Activated CD4-positive, alpha-beta T cell treated with anti-CD3 and anti-CD28 coated beads, Interleukin-2, amount 10 ng/mL, durations not matched to agents 7 days and 5 days (primary cell): ENCODE measurements at regions of chr11 and their contacts with region 1.

Region 1: GRCh38 chr11:1574238-1574932 is 2.3 kb upstream of the DUSP8 start:
- DNase-seq: peak; percentile 42
- H3K4me3 Mint-ChIP-seq: no peak overlapping the region
- H3K27ac Mint-ChIP-seq: no peak overlapping the region
- H3K4me1 Mint-ChIP-seq: peaks cover 11% of the 10 kb centered on the region
- H3K27me3 Mint-ChIP-seq: peaks cover 35% of the 10 kb centered on the region

Region 2: DNA sequence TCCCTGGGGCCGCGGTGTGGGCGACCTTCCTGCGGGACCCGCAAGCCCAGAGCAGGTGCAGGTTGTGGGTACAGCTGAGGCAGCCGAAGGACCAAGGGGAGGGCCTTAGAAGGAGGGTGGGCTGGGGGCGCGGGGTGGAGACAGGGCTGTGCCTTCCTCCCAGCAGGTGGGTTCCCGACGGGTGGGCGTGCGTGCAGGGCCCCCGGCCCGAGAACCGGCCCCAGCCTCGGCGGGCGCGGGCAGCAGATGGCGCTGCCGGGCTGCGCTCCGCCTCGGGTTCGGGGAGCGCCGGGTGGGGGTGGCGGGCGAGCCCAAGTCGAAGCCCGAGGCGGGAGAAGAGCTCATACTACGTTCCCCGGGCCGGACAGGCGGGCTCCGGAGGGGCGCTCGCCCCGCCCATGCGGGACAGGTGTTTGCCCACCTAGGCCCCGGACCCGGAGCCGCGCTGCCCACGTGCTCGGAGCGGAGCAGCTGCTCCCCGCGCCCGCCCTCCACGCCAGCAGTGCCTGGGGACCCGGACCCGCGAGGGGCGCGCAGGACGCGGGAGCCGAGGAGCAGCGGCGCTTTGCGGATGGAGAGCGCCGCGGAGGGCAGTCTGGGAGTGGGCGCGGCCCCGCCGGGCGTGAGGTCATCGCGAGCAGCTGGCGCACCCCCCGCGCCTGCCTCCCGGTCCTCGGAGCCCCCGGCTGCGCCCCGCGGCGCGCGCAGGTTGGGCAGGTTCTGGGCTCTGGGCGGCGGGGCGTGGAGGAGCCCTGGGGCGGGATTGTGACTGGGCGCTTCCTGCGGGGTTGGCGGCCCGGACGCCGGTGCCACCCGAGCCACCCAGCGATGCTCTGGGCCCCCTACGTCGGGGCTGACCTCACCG is 27.6 kb before region 1 on chr11:
- CTCF ChIA-PET with region 1: interaction called, 10 read pairs
- POLR2A ChIA-PET with region 1: interaction called, 4 read pairs
- DNase-seq: peak; percentile 14
- H3K4me3 Mint-ChIP-seq: no peak overlapping the region
- H3K27ac Mint-ChIP-seq: no peak overlapping the region
- H3K4me1 Mint-ChIP-seq: peaks cover 4% of the 10 kb centered on the region
- H3K27me3 Mint-ChIP-seq: peaks cover 35% of the 10 kb centered on the region

Region 3: GRCh38 chr11:1589996-1590395 is 15.6 kb after region 1 on chr11:
- CTCF ChIA-PET with region 1: interaction called, 15 read pairs
- POLR2A ChIA-PET with region 1: no interaction called
- DNase-seq: no peak
- H3K4me3 Mint-ChIP-seq: no peak overlapping the region
- H3K27ac Mint-ChIP-seq: peak overlapping the region; percentile 52
- H3K4me1 Mint-ChIP-seq: peaks cover 19% of the 10 kb centered on the region
- H3K27me3 Mint-ChIP-seq: peaks cover 29% of the 10 kb centered on the region